Left cardiac atrium (tissue), 4 donors: ENCODE measurements at regions of chr1 and their contacts with region 1.

Region 1: GRCh38 chr1:165592945-165593823 is 37.9 kb upstream of the MGST3 start:
- DNase-seq: peak; percentile 54
- ATAC-seq: peak; percentile 48 to 60

Region 2: DNA sequence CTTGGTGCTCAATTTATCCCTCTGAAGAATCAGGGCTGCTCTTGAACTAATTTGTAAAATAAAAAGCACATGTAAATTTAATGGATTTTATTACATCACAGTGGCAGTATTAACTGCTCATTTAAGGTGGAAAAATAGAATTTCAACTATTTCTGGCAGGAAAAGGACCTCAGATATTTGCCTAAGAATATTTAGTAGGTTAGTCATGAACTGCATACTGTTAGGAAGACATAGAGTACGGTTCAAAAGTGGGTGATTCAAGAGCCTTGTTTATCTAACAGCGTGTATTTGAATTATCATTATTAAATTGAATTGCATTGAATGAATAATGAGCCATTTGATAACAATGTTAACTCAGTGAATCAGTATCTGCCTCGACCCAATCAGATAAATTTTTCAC is 1283.0 kb before region 1 on chr1:
- intact Hi-C with region 1: no loop called
- DNase-seq: no peak
- ATAC-seq: no peak

Region 3: GRCh38 chr1:165392634-165393571 is 200.3 kb before region 1 on chr1:
- intact Hi-C with region 1: loop called in 1 of 2 experiments (anchors 2 kb)
- DNase-seq: peak; percentile 88
- ATAC-seq: peak; percentile 92 to 97

Region 4: GRCh38 chr1:165686121-165686970 is 93.2 kb after region 1 on chr1:
- intact Hi-C with region 1: no loop called
- DNase-seq: no peak
- ATAC-seq: no peak

Region 5: DNA sequence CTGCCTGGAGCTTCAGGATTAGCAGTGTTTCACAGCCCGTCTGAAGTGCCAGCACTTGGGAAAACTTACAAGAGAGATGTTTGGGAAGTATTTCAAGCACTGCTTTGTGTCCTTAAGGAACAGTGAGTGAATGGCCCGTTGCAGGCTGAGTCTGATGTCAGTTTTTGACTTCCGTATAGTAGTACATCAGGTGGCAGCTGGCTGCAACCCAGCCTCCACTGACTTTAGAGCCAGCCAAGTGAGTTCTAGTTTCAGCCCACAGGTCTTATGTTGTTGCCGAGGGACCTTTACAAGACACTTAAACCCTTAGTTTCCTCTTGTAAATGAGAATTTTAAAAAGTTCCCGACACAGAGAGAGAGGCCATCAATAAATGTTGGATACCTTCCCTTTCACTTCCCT is 269.3 kb after region 1 on chr1:
- intact Hi-C with region 1: no loop called
- DNase-seq: no peak
- ATAC-seq: peak in 1 of 2 donors; percentile 31

Region 6: GRCh38 chr1:166197141-166197540 is 604.0 kb after region 1 on chr1:
- intact Hi-C with region 1: no loop called
- DNase-seq: no peak
- ATAC-seq: peak in 1 of 2 donors; percentile 93